ENCODE measurements at regions of chr17 and their contacts with region 1.

Region 1: GRCh38 chr17:5486204-5487124 is at the start of gene MIS12:
- DNase-seq: peak; percentile 92 to 99 (median 98)
- ATAC-seq: peak; percentile 92 to 93
- H3K4me3 Mint-ChIP-seq: peak within 1 kb of the TSS; percentile 93 to 97 (median 96)
- H3K27ac Mint-ChIP-seq: peak within 1 kb of the TSS; percentile 96 to 100 (median 98)
- H3K4me1 Mint-ChIP-seq: peaks cover 19 to 63% (median 61%) of the 10 kb centered on the region in 4 donors
- H3K27me3 Mint-ChIP-seq: no peaks in the 10 kb centered on the region
- polyA plus RNA-seq, gene MIS12: 15.6 to 18.3 (median 16.6) TPM

Region 2: GRCh38 chr17:5468075-5468473 is 18.4 kb before region 1 on chr17:
- POLR2A ChIA-PET with region 1: interaction called, 41 read pairs
- DNase-seq: peak in 4 of 10 donors; percentile 11 to 18 (median 15)
- ATAC-seq: peak; percentile 45 to 46
- H3K4me3 Mint-ChIP-seq: peak overlapping the region; percentile 72 to 91 (median 84)
- H3K27ac Mint-ChIP-seq: peak overlapping the region; percentile 3 to 85 (median 54)
- H3K4me1 Mint-ChIP-seq: peaks cover 26 to 43% (median 39%) of the 10 kb centered on the region in 4 donors
- H3K27me3 Mint-ChIP-seq: no peaks in the 10 kb centered on the region

Region 3: GRCh38 chr17:5500589-5501391 is 14.3 kb after region 1 on chr17:
- POLR2A ChIA-PET with region 1: interaction called, 63 read pairs
- DNase-seq: peak; percentile 68 to 93 (median 81)
- ATAC-seq: peak; percentile 94
- H3K4me3 Mint-ChIP-seq: peak overlapping the region; percentile 90 to 99 (median 96)
- H3K27ac Mint-ChIP-seq: peak overlapping the region; percentile 81 to 98 (median 96)
- H3K4me1 Mint-ChIP-seq: peaks cover 9 to 26% (median 20%) of the 10 kb centered on the region in 4 donors
- H3K27me3 Mint-ChIP-seq: no peaks in the 10 kb centered on the region

Measured in naive thymus-derived CD8-positive, alpha-beta T cell (primary cell).